Posterior vena cava (tissue), 2 donors: ENCODE measurements at regions of chr1 and their contacts with region 1.

Region 1: DNA sequence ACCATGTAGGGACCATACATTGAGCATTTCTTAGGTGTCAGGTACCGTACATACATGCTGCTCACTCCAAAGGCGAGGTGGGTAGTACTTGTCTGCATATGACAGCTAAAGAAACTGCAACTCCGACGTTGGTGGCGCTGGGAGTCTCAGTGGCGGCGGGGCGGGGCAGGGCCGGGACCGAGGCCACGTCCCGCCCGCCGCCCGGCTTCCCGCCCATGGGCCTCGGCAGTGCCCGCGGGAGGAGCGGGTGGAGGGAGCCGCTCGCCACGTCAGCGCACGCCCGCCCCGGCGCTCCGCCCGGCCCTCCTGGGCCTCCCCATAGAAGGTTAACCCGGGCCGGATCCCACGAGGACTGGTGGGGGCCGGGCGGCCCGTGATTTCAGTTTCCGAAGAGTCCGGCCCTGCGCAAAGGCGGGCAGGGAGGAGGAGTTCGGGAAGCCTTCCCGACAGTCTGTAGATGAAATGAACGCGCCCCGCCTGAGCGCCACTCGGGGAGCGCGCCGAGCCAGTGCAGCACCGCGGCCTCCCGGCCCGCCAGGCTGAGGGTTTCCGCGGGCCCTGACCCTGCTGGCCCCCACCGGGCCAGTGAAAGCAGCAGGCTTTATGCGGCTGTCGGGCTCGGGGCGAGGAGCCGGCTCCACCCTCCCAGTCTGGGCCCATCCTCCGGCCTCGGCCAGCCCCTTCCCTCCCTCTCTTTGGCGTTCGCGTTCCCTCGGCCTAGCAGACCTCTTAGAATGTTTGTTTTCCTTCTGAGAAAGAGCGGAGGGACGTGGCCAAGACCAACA is 119.9 kb upstream of the JUN start:
- DNase-seq: peak; percentile 99

Region 2: DNA sequence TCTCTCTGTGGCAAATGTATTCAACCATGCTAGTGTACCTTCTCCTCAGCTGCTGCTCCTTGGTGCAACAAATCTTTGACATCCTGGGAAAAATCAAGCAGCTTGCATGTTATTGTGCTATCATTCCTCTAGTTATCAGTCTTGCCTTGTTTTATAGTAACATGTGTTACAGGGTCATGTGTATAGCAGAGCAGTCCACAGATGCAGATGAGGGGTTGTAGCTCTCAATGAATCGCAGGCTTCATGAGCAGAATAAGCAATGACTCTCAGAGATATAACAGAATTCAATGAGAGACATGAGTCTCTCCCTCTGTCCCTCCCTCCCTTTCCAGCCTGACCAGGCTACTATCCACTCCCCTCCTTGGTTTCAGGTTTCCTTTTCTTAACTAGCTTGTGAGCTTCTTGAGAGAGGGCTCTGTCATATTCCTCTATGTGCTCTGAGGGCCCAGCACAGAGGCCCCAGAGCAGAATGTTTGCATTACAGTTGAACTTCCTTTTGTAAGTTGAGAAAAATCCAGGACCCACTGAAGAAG is 104.7 kb before region 1 on chr1:
- intact Hi-C with region 1: no loop called
- DNase-seq: no peak

Region 3: GRCh38 chr1:59146651-59147358 is 243.1 kb after region 1 on chr1:
- intact Hi-C with region 1: loop called in 1 of 2 experiments (anchors 10 kb)
- DNase-seq: peak; percentile 89